Prostate gland (tissue), 2 donors: ENCODE measurements at regions of chr1 and their contacts with region 1.

Region 1: GRCh38 chr1:225474986-225475820 is 47.4 kb upstream of the LBR start:
- DNase-seq: no peak
- H3K4me3 ChIP-seq: no peak overlapping the region
- H3K27ac ChIP-seq: no peak overlapping the region
- H3K4me1 ChIP-seq: no peaks in the 10 kb centered on the region
- H3K27me3 ChIP-seq: no peaks in the 10 kb centered on the region
- CTCF ChIP-seq: peak; percentile 100
- POLR2A ChIP-seq: no peak

Region 2: DNA sequence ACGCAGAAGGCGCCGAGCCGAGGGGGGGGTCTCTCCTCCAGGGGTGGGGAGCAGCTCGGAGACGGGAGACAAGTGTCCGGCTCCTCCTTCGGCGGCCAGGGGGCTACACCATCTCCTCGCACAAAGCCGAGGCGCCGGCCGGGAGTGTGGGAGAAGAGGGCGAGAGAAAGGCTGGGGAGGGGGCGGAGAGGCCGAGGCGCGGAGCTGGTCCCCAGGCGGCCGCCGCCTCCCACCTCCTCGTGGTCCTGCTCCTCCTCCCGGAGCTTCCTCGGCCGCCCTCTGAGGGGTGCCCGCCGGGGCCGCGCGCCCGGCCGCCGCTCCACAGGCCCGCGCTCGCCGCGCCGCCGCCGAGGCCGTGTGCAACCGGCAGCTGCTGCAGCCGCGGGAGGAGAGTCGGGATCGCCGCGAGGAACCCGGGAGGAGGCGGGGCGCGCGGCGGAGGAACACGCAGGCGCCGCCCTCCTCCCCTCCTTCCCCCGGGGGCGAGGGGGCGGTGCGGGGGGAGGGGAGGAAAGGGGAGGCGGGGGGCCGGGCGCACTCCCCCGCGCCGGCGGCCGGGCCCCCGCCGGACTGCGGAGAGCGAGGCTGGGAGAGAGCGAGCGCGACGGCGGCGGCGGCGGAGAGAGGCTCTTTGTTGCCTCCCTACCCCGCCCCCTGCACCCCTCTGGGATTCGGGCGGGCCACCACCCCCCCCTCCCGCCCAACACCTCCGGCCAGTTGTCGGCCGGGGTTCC is 177.7 kb after region 1 on chr1 and contains the start of gene ENAH:
- intact Hi-C with region 1: loop called (anchors 2 kb)
- DNase-seq: peak; percentile 78
- H3K4me3 ChIP-seq: peak within 1 kb of the TSS; percentile 95 to 96
- H3K27ac ChIP-seq: peak within 1 kb of the TSS; percentile 96 to 97
- H3K4me1 ChIP-seq: no peaks in the 10 kb centered on the region
- H3K27me3 ChIP-seq: no peaks in the 10 kb centered on the region
- CTCF ChIP-seq: no peak
- POLR2A ChIP-seq: peak; percentile 54
- total RNA-seq, gene ENAH: 36.4 to 93.6 TPM

Region 3: DNA sequence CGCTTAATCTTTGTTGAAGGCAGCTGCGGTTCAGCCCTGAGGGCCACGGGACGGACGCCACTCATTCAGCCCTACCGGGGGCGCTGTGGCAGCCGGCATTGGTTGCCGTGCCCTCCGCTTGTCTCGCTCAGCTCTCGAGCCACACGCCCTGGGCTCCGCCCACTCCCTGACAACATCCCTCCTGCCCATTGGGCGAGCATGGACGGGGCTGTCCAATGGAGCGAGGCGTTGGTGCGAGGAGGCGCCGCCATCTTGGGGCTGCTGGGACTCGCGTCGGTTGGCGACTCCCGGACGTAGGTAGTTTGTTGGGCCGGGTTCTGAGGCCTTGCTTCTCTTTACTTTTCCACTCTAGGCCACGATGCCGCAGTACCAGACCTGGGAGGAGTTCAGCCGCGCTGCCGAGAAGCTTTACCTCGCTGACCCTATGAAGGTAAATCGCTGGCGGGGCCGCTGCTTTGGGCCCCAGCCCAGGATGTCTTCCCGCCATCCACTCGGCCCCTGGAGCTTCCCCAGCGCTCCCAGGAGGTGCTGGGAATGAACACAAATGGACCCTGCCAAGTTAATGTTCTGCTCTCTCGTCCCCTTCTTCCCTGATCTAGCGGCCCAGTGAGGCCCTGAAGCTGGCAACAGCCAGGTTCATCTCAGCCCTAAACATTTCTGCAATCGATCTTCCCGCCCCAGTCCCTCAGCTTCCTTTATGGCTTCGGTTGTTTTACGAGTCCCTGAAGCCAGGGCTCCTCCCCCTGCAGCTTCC is 302.6 kb after region 1 on chr1 and contains the start of gene SRP9:
- intact Hi-C with region 1: loop called (anchors 2 kb)
- DNase-seq: peak; percentile 98
- H3K4me3 ChIP-seq: peak within 1 kb of the TSS; percentile 65 to 70
- H3K27ac ChIP-seq: peak within 1 kb of the TSS; percentile 92 to 96
- H3K4me1 ChIP-seq: peaks cover 10% of the 10 kb centered on the region
- H3K27me3 ChIP-seq: no peaks in the 10 kb centered on the region
- CTCF ChIP-seq: peak; percentile 81 to 96 (median 90)
- POLR2A ChIP-seq: peak; percentile 69
- total RNA-seq, gene SRP9: 168 to 324 TPM

Region 4: GRCh38 chr1:225911191-225912130 is 436.3 kb after region 1 on chr1:
- intact Hi-C with region 1: loop called (anchors 2 kb)
- DNase-seq: peak; percentile 35
- H3K4me3 ChIP-seq: no peak overlapping the region
- H3K27ac ChIP-seq: no peak overlapping the region
- H3K4me1 ChIP-seq: no peaks in the 10 kb centered on the region
- H3K27me3 ChIP-seq: no peaks in the 10 kb centered on the region
- CTCF ChIP-seq: peak; percentile 74 to 90 (median 89)
- POLR2A ChIP-seq: no peak

Region 5: GRCh38 chr1:225977937-225978748 is 502.9 kb after region 1 on chr1:
- intact Hi-C with region 1: loop called (anchors 2 kb)
- DNase-seq: no peak
- H3K4me3 ChIP-seq: no peak overlapping the region
- H3K27ac ChIP-seq: no peak overlapping the region
- H3K4me1 ChIP-seq: peaks cover 6% of the 10 kb centered on the region
- H3K27me3 ChIP-seq: no peaks in the 10 kb centered on the region
- CTCF ChIP-seq: no peak
- POLR2A ChIP-seq: no peak